Activated CD4-positive, alpha-beta memory T cell treated with anti-CD3 and anti-CD28 coated beads, Interleukin-2, amount 10 ng/mL, durations not matched to agents 7 days and 5 days (primary cell): ENCODE measurements at regions of chr11 and their contacts with region 1.

Region 1: GRCh38 chr11:126480410-126481302 is 125.2 kb downstream of the ST3GAL4 start:
- DNase-seq: peak; percentile 77
- H3K4me3 Mint-ChIP-seq: peak overlapping the region; percentile 24
- H3K27ac Mint-ChIP-seq: peak overlapping the region; percentile 27
- H3K4me1 Mint-ChIP-seq: peaks cover 23% of the 10 kb centered on the region
- H3K27me3 Mint-ChIP-seq: peaks cover 2% of the 10 kb centered on the region

Region 2: DNA sequence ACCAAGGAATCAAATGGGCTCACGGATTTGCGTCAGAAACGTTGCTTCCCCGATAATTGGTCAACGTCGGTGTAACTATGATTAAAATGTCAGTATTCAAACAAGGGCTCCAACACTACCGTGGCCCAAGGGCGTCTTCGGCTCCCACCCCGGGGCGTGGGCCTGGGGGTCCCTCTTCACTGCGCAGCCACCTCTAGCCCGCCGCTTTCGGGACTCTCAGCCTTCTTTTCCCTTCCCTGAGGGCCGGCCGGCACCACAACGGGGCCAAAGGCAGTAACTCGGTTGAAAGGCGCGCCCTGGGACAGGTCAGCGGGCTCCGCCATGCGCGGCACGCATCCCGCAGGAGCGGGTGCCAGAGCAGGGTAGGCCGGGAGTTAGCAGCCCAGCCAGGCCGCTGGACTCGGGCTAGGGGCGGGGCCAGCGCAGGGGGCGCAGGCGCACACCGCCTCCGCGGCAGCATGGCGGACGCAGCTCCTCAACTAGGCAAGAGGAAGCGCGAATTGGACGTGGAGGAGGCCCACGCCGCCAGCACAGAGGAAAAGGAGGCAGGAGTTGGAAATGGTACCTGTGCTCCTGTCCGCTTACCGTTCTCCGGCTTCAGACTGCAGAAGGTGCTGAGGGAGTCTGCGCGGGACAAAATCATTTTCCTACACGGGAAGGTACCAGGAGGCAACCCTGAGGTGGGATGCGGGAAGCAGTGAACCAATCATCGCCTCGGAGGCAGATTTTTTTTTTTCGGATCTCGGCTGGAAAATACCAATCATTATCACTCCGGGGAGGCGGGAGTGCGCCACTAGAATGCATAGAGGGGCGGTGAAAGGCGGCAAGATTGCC is 176.8 kb before region 1 on chr11 and contains the start of gene DCPS:
- CTCF ChIA-PET with region 1: interaction called, 17 read pairs
- POLR2A ChIA-PET with region 1: interaction called, 6 read pairs
- DNase-seq: peak; percentile 90
- H3K4me3 Mint-ChIP-seq: peak within 1 kb of the TSS; percentile 77
- H3K27ac Mint-ChIP-seq: peak within 1 kb of the TSS; percentile 75
- H3K4me1 Mint-ChIP-seq: peaks cover 30% of the 10 kb centered on the region
- H3K27me3 Mint-ChIP-seq: no peaks in the 10 kb centered on the region
- total RNA-seq, gene DCPS: 34.5 to 35.8 TPM

Region 3: GRCh38 chr11:126318574-126319373 is 161.9 kb before region 1 on chr11:
- CTCF ChIA-PET with region 1: interaction called, 18 read pairs
- POLR2A ChIA-PET with region 1: no interaction called
- DNase-seq: peak; percentile 44
- H3K4me3 Mint-ChIP-seq: no peak overlapping the region
- H3K27ac Mint-ChIP-seq: peak overlapping the region; percentile 78
- H3K4me1 Mint-ChIP-seq: peaks cover 33% of the 10 kb centered on the region
- H3K27me3 Mint-ChIP-seq: no peaks in the 10 kb centered on the region

Region 4: GRCh38 chr11:126332131-126332711 is 148.4 kb before region 1 on chr11:
- CTCF ChIA-PET with region 1: no interaction called
- POLR2A ChIA-PET with region 1: no interaction called
- DNase-seq: no peak
- H3K4me3 Mint-ChIP-seq: no peak overlapping the region
- H3K27ac Mint-ChIP-seq: no peak overlapping the region
- H3K4me1 Mint-ChIP-seq: peaks cover 14% of the 10 kb centered on the region
- H3K27me3 Mint-ChIP-seq: no peaks in the 10 kb centered on the region

Region 5: DNA sequence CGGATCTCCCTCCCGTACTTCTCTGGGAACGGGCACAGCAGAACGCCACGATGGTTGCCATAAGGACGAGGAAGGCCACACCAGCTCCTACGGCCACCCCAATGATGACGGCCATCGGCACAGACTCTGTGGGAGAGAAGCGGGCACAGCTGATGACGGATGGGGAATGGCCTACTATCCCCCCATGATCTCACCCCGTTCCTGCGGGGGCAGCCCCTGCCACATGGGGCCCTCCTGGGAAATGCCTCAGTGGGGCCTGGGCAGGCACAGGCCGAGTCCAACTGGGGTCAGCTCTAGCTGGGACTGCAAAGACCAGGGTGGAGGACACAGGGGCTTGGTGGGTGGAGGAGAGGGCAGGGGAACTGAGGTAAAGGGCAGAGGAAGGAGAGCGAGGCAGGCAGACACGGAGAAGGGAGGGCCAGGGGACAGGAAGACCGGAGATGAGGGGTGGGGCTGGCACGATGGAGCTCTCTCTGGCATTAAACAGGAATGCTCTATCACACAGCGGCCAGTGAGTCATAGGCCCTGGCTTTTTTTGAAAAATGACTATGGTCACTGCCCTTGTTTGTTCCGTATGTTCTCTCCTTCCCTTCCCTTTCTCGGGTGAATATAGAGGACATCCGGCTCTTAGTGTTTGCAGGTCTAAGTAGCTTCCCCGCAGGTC is 49.1 kb before region 1 on chr11:
- CTCF ChIA-PET with region 1: interaction called, 10 read pairs
- POLR2A ChIA-PET with region 1: interaction called, 4 read pairs
- DNase-seq: no peak
- H3K4me3 Mint-ChIP-seq: no peak overlapping the region
- H3K27ac Mint-ChIP-seq: no peak overlapping the region
- H3K4me1 Mint-ChIP-seq: no peaks in the 10 kb centered on the region
- H3K27me3 Mint-ChIP-seq: no peaks in the 10 kb centered on the region

Region 6: GRCh38 chr11:126465573-126466188 is 15.0 kb before region 1 on chr11:
- CTCF ChIA-PET with region 1: interaction called, 51 read pairs
- POLR2A ChIA-PET with region 1: interaction called, 14 read pairs
- DNase-seq: peak; percentile 62
- H3K4me3 Mint-ChIP-seq: no peak overlapping the region
- H3K27ac Mint-ChIP-seq: peak overlapping the region; percentile 79
- H3K4me1 Mint-ChIP-seq: peaks cover 24% of the 10 kb centered on the region
- H3K27me3 Mint-ChIP-seq: peaks cover 5% of the 10 kb centered on the region